ENCODE measurements at regions of chr17 and their contacts with region 1.

Region 1: DNA sequence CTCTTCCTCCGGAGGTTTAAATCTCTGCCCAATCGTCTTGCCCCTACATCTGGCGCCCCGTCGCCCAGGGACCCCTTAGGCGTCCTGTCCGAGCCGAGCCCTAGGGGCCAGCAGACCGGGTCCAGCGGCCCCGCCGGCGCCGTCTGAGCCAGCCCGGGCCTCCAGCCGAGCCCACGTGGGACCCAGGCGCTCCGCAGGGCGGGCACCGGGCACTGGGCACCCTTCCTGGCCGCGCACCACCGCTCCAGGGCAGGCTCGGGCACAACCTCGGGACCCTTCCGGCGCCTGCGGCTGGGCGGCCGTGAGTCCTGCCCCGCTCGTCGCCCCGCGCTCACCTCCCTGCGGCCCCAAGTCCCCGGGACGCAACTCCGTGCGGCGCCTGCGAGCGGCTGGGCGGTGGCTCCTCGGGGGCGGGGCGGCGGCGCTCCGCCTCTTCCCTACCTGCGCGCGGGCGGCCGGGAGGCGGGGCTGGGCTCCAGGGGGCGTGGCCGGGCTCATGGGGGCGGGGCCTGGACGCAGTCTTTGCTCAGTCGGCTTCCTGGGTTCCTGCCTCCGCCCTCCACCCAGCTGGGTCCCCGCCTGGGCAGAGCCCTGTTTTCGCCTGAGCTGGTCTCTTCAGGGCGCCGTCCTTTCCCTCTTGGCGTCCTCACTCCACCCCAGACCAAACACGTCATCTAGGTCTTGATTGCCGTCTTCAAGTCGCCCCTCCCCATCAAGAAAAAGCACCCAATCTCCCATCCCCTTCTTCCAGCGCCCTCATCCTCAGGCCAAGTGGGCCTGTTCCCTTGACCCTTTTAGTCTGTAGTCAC is at the start of gene RHBDF2:
- DNase-seq: no peak
- H3K4me3 ChIP-seq: peak within 1 kb of the TSS; percentile 55 to 84
- H3K27ac ChIP-seq: peak within 1 kb of the TSS; percentile 85
- H3K4me1 ChIP-seq: peaks cover 58% of the 10 kb centered on the region
- H3K27me3 ChIP-seq: no peaks in the 10 kb centered on the region
- CTCF ChIP-seq: no peak
- POLR2A ChIP-seq: peak in 1 of 2 donors; percentile 80
- total RNA-seq, gene RHBDF2: 34.6 TPM

Region 2: GRCh38 chr17:76408052-76408849 is 93.0 kb before region 1 on chr17:
- intact Hi-C with region 1: loop called (anchors 10 kb)
- DNase-seq: no peak
- H3K4me3 ChIP-seq: no peak overlapping the region
- H3K27ac ChIP-seq: no peak overlapping the region
- H3K4me1 ChIP-seq: no peaks in the 10 kb centered on the region
- H3K27me3 ChIP-seq: no peaks in the 10 kb centered on the region
- CTCF ChIP-seq: peak; percentile 21 to 39 (median 30)
- POLR2A ChIP-seq: no peak

Measured in vagina (tissue), 2 donors.